ENCODE measurements at regions of chr16 and their contacts with region 1.

Region 1: DNA sequence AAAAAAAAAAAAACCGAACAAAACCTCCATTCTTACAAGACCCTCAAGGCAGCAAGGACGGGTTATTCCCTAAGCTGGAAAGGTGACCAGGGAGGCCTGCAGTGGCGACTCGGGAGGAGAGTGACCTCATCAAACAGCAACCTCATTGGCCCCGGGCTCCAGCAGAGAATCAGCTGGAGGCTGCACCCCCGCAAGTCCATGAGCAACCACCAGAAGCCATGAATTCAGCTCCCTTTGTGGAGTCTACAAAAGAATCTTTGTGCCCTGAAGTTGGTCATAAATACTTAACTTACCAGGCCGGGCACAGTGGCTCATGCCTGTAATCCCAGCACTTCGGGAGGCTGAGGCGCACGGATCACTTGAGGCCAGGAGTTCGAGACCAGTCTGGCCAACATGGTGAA is 80.9 kb upstream of the CREBBP start:
- DNase-seq: no peak
- ATAC-seq: no peak
- H3K4me3 ChIP-seq: no peak overlapping the region
- H3K4me3 Mint-ChIP-seq: peak overlapping the region in 7 of 10 donors; percentile 2 to 94 (median 74)
- H3K27ac ChIP-seq: no peak overlapping the region
- H3K27ac Mint-ChIP-seq: peak overlapping the region in 5 of 9 donors; percentile 66 to 98 (median 95)
- H3K4me1 ChIP-seq: peaks cover 15 to 23% of the 10 kb centered on the region in 2 donors
- H3K4me1 Mint-ChIP-seq: peaks cover 9 to 34% (median 24%) of the 10 kb centered on the region in 7 donors
- H3K27me3 ChIP-seq: peaks cover 0 to 2% of the 10 kb centered on the region in 2 donors
- H3K27me3 Mint-ChIP-seq: peaks cover 0 to 15% (median 5%) of the 10 kb centered on the region in 5 donors

Region 2: GRCh38 chr16:3797904-3798811 is 163.3 kb before region 1 on chr16:
- CTCF ChIA-PET with region 1: no interaction called
- POLR2A ChIA-PET with region 1: no interaction called
- intact Hi-C with region 1: no loop called
- DNase-seq: no peak
- ATAC-seq: no peak
- H3K4me3 ChIP-seq: peak overlapping the region; percentile 9
- H3K4me3 Mint-ChIP-seq: peak overlapping the region; percentile 7 to 73 (median 47)
- H3K27ac ChIP-seq: no peak overlapping the region
- H3K27ac Mint-ChIP-seq: peak overlapping the region in 7 of 9 donors; percentile 5 to 48 (median 32)
- H3K4me1 ChIP-seq: peaks cover 23 to 45% of the 10 kb centered on the region in 2 donors
- H3K4me1 Mint-ChIP-seq: peaks cover 44 to 91% (median 74%) of the 10 kb centered on the region in 7 donors
- H3K27me3 ChIP-seq: no peaks in the 10 kb centered on the region
- H3K27me3 Mint-ChIP-seq: no peaks in the 10 kb centered on the region

Region 3: DNA sequence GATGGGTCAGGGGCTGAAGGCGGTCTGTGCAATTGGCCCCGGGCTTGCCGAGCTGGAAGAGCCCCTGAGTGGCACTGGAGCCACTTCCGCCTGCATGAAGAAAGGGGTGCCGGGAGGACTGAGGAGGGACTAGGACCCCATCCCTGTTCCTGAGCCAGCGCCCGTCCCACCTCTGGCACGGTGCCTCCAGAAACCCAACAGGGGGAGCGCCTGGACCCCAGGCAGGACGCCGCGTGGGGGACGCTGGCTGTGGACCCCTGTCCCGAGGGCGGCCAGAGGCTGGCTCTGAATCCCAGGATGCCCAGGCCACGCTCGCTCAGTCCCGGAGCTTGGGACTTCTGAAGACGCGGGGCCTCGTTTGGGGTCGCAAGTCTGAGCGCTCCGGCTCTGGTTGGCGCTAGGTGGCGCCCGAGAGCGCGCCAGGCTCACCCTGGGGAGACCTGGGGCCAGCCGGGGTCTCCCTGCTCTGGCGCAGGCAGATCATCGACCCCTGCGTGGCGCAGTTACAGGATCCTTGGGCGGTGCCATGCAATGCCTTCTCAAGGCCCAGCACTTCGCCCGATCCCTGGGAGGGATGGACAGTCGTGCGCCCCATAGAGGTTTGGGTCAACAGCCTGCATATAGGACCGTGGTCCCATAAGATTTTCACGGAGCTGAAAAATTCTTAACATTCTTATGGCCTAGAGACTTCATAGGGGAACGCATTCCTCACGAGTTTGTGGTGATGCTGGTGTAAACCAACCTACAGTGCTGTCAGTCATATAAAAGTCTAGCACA is 22.4 kb before region 1 on chr16:
- CTCF ChIA-PET with region 1: no interaction called
- POLR2A ChIA-PET with region 1: interaction called, 3 read pairs
- intact Hi-C with region 1: loop called in 1 of 2 experiments (anchors 2 kb)
- DNase-seq: peak; percentile 39 to 79 (median 63)
- ATAC-seq: peak; percentile 89
- H3K4me3 ChIP-seq: peak overlapping the region; percentile 35
- H3K4me3 Mint-ChIP-seq: peak overlapping the region; percentile 5 to 75 (median 52)
- H3K27ac ChIP-seq: no peak overlapping the region
- H3K27ac Mint-ChIP-seq: no peak overlapping the region
- H3K4me1 ChIP-seq: no peaks in the 10 kb centered on the region
- H3K4me1 Mint-ChIP-seq: peaks cover 0 to 4% (median 0%) of the 10 kb centered on the region in 7 donors
- H3K27me3 ChIP-seq: no peaks in the 10 kb centered on the region
- H3K27me3 Mint-ChIP-seq: peaks cover 0 to 7% (median 0%) of the 10 kb centered on the region in 5 donors

Region 4: GRCh38 chr16:4116337-4117249 is 155.1 kb after region 1 on chr16 and contains the start of gene ADCY9:
- CTCF ChIA-PET with region 1: no interaction called
- POLR2A ChIA-PET with region 1: no interaction called
- intact Hi-C with region 1: loop called in 1 of 2 experiments (anchors 1 kb)
- DNase-seq: peak; percentile 67 to 89 (median 78)
- ATAC-seq: peak; percentile 95
- H3K4me3 ChIP-seq: peak within 1 kb of the TSS; percentile 65
- H3K4me3 Mint-ChIP-seq: peak within 1 kb of the TSS; percentile 79 to 94 (median 88)
- H3K27ac ChIP-seq: peak within 1 kb of the TSS; percentile 14
- H3K27ac Mint-ChIP-seq: peak within 1 kb of the TSS in 8 of 9 donors; percentile 25 to 82 (median 70)
- H3K4me1 ChIP-seq: peaks cover 13 to 19% of the 10 kb centered on the region in 2 donors
- H3K4me1 Mint-ChIP-seq: peaks cover 31 to 41% (median 38%) of the 10 kb centered on the region in 7 donors
- H3K27me3 ChIP-seq: no peaks in the 10 kb centered on the region
- H3K27me3 Mint-ChIP-seq: peaks cover 0 to 26% (median 0%) of the 10 kb centered on the region in 5 donors
- total RNA-seq, gene ADCY9: 3.9 to 14.3 (median 5.6) TPM